Activated CD8-positive, alpha-beta T cell treated with anti-CD3 and anti-CD28 coated beads, Interleukin-2, amount 10 ng/mL, durations not matched to agents 7 days and 5 days (primary cell): ENCODE measurements at regions of chr1 and their contacts with region 1.

Region 1: DNA sequence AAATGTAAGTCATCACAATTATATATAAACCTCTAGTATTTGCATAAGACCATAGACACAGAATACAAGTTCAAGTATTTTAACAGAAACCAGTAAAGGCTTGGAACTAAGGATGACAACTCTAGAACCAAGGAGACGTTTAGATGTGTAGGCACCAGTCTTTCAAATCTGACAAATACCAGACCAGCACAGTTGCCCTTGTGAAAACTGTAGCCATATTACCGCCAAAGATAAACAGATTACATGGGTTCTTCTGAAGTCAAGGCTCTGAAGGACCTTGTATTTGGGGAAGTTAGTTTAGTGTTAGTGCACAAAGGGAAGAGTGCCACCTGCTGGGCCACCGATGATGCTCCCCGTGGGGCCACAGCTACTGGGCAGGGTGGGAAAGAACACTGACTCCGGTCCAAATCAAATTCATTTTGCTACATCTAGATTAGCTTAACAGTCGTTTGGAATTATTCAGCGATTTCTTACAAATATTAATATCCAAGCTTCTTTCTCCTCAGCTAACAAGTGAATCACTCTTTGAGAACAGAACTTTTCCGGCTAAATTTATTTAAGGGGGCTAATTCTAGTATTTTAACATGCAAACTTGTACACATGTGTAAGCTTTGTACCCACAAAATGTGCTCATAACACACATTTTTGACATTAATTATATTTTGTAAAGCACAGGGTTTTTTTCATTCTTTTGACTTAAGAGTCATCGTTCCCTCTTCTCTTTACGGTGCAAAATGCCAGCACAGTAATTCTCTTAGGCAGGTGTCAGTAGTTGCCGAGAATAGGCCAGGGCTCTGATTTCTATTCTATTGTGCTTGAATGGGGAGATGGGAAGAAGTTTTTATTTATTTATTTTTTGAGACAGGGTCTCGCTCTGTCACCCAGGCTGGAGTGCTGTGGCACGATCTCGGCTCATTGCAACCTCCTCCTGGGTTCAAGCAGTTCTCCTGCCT is 8.0 kb upstream of the NIBAN1 start:
- DNase-seq: peak; percentile 83
- ATAC-seq: peak; percentile 99
- H3K4me3 Mint-ChIP-seq: no peak overlapping the region
- H3K27ac Mint-ChIP-seq: no peak overlapping the region
- H3K4me1 Mint-ChIP-seq: peaks cover 7% of the 10 kb centered on the region
- H3K27me3 Mint-ChIP-seq: peaks cover 28% of the 10 kb centered on the region

Region 2: GRCh38 chr1:184813528-184814089 is 168.7 kb before region 1 on chr1:
- CTCF ChIA-PET with region 1: interaction called, 170 read pairs
- POLR2A ChIA-PET with region 1: no interaction called
- DNase-seq: no peak
- ATAC-seq: no peak
- H3K4me3 Mint-ChIP-seq: no peak overlapping the region
- H3K27ac Mint-ChIP-seq: no peak overlapping the region
- H3K4me1 Mint-ChIP-seq: no peaks in the 10 kb centered on the region
- H3K27me3 Mint-ChIP-seq: no peaks in the 10 kb centered on the region